IMR-90 (cell line): ENCODE measurements at regions of chr16 and their contacts with region 1.

Region 1: GRCh38 chr16:11032922-11033291 is 88.5 kb downstream of the CLEC16A start:
- DNase-seq: peak; percentile 80
- ATAC-seq: peak; percentile 45
- H3K4me3 ChIP-seq: no peak overlapping the region
- H3K27ac ChIP-seq: peak overlapping the region; percentile 53; the same call in 1 of the 2 replicates
- H3K4me1 ChIP-seq: peaks cover 38% of the 10 kb centered on the region
- H3K27me3 ChIP-seq: no peaks in the 10 kb centered on the region
- CTCF ChIP-seq: no peak
- POLR2A ChIP-seq: no peak
- RAD21 ChIP-seq: no peak

Region 2: GRCh38 chr16:10981697-10982216 is 51.1 kb before region 1 on chr16:
- CTCF ChIA-PET with region 1: no interaction called
- POLR2A ChIA-PET with region 1: no interaction called
- dilution Hi-C with region 1: no loop called
- in situ Hi-C with region 1: no loop called
- intact Hi-C with region 1: loop called (anchors 1 kb)
- DNase-seq: no peak
- ATAC-seq: no peak; the same call in 1 of the 2 replicates
- H3K4me3 ChIP-seq: no peak overlapping the region
- H3K27ac ChIP-seq: no peak overlapping the region
- H3K4me1 ChIP-seq: peaks cover 17% of the 10 kb centered on the region
- H3K27me3 ChIP-seq: no peaks in the 10 kb centered on the region
- CTCF ChIP-seq: peak; percentile 24; the same call in 1 of the 2 replicates
- POLR2A ChIP-seq: no peak
- RAD21 ChIP-seq: no peak; the same call in 1 of the 2 replicates

Region 3: GRCh38 chr16:10992797-10993196 is 40.1 kb before region 1 on chr16:
- CTCF ChIA-PET with region 1: no interaction called
- POLR2A ChIA-PET with region 1: no interaction called
- dilution Hi-C with region 1: no loop called
- in situ Hi-C with region 1: no loop called
- intact Hi-C with region 1: loop called (anchors 1 kb)
- DNase-seq: peak; percentile 93
- ATAC-seq: peak; percentile 71
- H3K4me3 ChIP-seq: no peak overlapping the region
- H3K27ac ChIP-seq: peak overlapping the region; percentile 98
- H3K4me1 ChIP-seq: peaks cover 35% of the 10 kb centered on the region
- H3K27me3 ChIP-seq: no peaks in the 10 kb centered on the region
- CTCF ChIP-seq: no peak
- POLR2A ChIP-seq: peak; percentile 71
- RAD21 ChIP-seq: no peak

Region 4: GRCh38 chr16:11094072-11094856 is 61.4 kb after region 1 on chr16:
- CTCF ChIA-PET with region 1: no interaction called
- POLR2A ChIA-PET with region 1: no interaction called
- dilution Hi-C with region 1: no loop called
- in situ Hi-C with region 1: no loop called
- intact Hi-C with region 1: loop called (anchors 5 kb)
- DNase-seq: peak; percentile 86
- ATAC-seq: peak; percentile 41
- H3K4me3 ChIP-seq: no peak overlapping the region
- H3K27ac ChIP-seq: peak overlapping the region; percentile 71
- H3K4me1 ChIP-seq: peaks cover 37% of the 10 kb centered on the region
- H3K27me3 ChIP-seq: no peaks in the 10 kb centered on the region
- CTCF ChIP-seq: no peak
- POLR2A ChIP-seq: no peak
- RAD21 ChIP-seq: no peak